ENCODE measurements at regions of chr2 and their contacts with region 1.

Region 1: GRCh38 chr2:95115418-95115817 is 6.2 kb downstream of the MRPS5 start:
- DNase-seq: no peak
- ATAC-seq: peak; percentile 100
- H3K4me3 ChIP-seq: no peak overlapping the region
- H3K27ac ChIP-seq: no peak overlapping the region
- H3K4me1 ChIP-seq: no peaks in the 10 kb centered on the region; the same call in 1 of the 2 replicates
- H3K27me3 ChIP-seq: no peaks in the 10 kb centered on the region
- CTCF ChIP-seq: peak; percentile 93

Region 2: GRCh38 chr2:94970353-94970752 is 145.1 kb before region 1 on chr2:
- CTCF ChIA-PET with region 1: no interaction called
- POLR2A ChIA-PET with region 1: no interaction called
- in situ Hi-C with region 1: no loop called
- intact Hi-C with region 1: no loop called
- DNase-seq: no peak
- ATAC-seq: no peak
- H3K4me3 ChIP-seq: no peak overlapping the region
- H3K27ac ChIP-seq: no peak overlapping the region
- H3K4me1 ChIP-seq: no peaks in the 10 kb centered on the region
- H3K27me3 ChIP-seq: peaks cover 46% of the 10 kb centered on the region
- CTCF ChIP-seq: no peak

Region 3: GRCh38 chr2:94986392-94986963 is 128.9 kb before region 1 on chr2:
- CTCF ChIA-PET with region 1: interaction called, 12 read pairs
- POLR2A ChIA-PET with region 1: no interaction called
- in situ Hi-C with region 1: no loop called
- intact Hi-C with region 1: no loop called
- DNase-seq: peak; percentile 58
- ATAC-seq: peak; percentile 90
- H3K4me3 ChIP-seq: no peak overlapping the region
- H3K27ac ChIP-seq: no peak overlapping the region
- H3K4me1 ChIP-seq: no peaks in the 10 kb centered on the region
- H3K27me3 ChIP-seq: peaks cover 12% of the 10 kb centered on the region
- CTCF ChIP-seq: peak; percentile 89

Region 4: DNA sequence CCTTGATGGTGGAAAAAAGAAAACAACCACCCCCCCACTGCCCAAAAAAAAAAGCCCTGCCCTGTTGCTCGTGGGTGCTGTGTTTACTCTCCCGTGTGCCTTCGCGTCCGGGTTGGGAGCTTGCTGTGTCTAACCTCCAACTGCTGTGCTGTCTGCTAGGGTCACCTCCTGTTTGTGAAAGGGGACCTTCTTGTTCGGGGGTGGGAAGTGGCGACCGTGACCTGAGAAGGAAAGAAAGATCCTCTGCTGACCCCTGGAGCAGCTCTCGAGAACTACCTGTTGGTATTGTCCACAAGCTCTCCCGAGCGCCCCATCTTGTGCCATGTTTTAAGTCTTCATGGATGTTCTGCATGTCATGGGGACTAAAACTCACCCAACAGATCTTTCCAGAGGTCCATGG is 61.9 kb before region 1 on chr2:
- CTCF ChIA-PET with region 1: interaction called, 5 read pairs
- POLR2A ChIA-PET with region 1: interaction called, 10 read pairs
- in situ Hi-C with region 1: no loop called
- intact Hi-C with region 1: no loop called
- DNase-seq: no peak
- ATAC-seq: no peak
- H3K4me3 ChIP-seq: no peak overlapping the region
- H3K27ac ChIP-seq: no peak overlapping the region
- H3K4me1 ChIP-seq: no peaks in the 10 kb centered on the region; the same call in 1 of the 2 replicates
- H3K27me3 ChIP-seq: peaks cover 8% of the 10 kb centered on the region
- CTCF ChIP-seq: no peak

Measured in Panc1 (cell line).